Gastrocnemius medialis (tissue), 4 donors: ENCODE measurements at regions of chr19 and their contacts with region 1.

Region 1: GRCh38 chr19:49829721-49830120 is 11.6 kb downstream of the MED25 start:
- DNase-seq: no peak
- ATAC-seq: no peak
- H3K4me3 ChIP-seq: no peak overlapping the region
- H3K27ac ChIP-seq: peak overlapping the region; percentile 87 to 96 (median 94)
- H3K4me1 ChIP-seq: peaks cover 33 to 57% of the 10 kb centered on the region in 2 donors
- H3K27me3 ChIP-seq: no peaks in the 10 kb centered on the region
- CTCF ChIP-seq: no peak
- POLR2A ChIP-seq: no peak

Region 2: DNA sequence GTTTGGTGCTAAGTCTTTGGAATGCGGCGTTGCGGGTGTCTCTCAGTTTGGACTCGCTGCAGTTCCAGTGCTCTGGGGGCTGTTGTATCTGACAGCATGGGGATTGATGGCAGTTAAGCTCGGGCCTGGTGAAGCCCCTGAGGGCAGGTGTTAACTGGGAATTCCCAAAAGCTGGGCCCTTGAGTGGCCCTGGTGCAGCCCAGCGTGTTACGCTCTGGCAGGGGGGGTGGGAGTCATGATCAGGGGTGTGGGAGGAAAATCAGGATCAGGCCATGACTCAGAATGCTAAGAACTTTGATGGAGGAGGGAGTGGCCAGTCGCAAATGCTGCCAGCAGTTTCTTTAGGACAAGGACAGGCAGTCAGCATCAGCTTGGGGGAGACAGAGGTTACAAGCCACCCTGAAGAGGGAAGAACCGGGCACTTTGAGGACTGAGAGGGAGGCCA is 43.3 kb before region 1 on chr19:
- in situ Hi-C with region 1: no loop called
- intact Hi-C with region 1: no loop called
- DNase-seq: no peak
- ATAC-seq: peak in 1 of 2 donors; percentile 36
- H3K4me3 ChIP-seq: no peak overlapping the region
- H3K27ac ChIP-seq: no peak overlapping the region
- H3K4me1 ChIP-seq: no peaks in the 10 kb centered on the region
- H3K27me3 ChIP-seq: no peaks in the 10 kb centered on the region
- CTCF ChIP-seq: no peak
- POLR2A ChIP-seq: no peak

Region 3: GRCh38 chr19:49843265-49843664 is 13.5 kb after region 1 on chr19:
- in situ Hi-C with region 1: no loop called
- intact Hi-C with region 1: loop called (anchors 2 kb)
- DNase-seq: peak in 1 of 2 donors; percentile 38
- ATAC-seq: peak in 1 of 2 donors; percentile 34
- H3K4me3 ChIP-seq: no peak overlapping the region
- H3K27ac ChIP-seq: peak overlapping the region; percentile 79 to 96 (median 92)
- H3K4me1 ChIP-seq: peaks cover 17 to 21% of the 10 kb centered on the region in 2 donors
- H3K27me3 ChIP-seq: no peaks in the 10 kb centered on the region
- CTCF ChIP-seq: no peak
- POLR2A ChIP-seq: no peak